Sciatic nerve (tissue), 2 donors: ENCODE measurements at regions of chrX and their contacts with region 1.

Region 1: DNA sequence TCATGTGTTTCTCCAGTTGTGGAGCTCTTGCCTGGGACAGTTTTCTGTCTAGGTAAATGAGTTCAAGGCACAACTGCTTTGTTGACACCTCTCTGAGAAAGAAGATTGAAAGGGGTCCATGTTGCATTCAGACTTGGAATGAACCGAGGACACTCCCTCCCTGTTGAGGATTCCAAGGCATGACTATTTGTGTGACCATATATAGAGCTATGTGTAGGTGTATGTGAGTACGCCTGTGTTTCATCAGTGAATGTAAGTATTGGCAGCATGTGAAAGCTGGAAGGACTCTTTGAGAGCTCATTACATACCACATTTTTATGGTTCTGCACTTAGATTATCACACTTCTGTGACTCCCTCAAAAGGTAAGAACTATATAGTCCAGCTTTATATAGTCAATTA is 3.4 kb downstream of the HEPH start:
- DNase-seq: no peak
- ATAC-seq: no peak

Region 2: GRCh38 chrX:65941775-65942174 is 225.7 kb before region 1 on chrX:
- intact Hi-C with region 1: loop called (anchors 5 kb)
- DNase-seq: no peak
- ATAC-seq: no peak